GM12878 (cell line): ENCODE measurements at regions of chr14 and their contacts with region 1.

Region 1: GRCh38 chr14:83874662-83875061 is 1655.3 kb upstream of the FLRT2 start:
- DNase-seq: no peak
- ATAC-seq: peak; percentile 77
- H3K4me3 ChIP-seq: no peak overlapping the region
- H3K27ac ChIP-seq: no peak overlapping the region
- H3K4me1 ChIP-seq: no peaks in the 10 kb centered on the region
- H3K27me3 ChIP-seq: no peaks in the 10 kb centered on the region
- CTCF ChIP-seq: no peak
- EP300 ChIP-seq: peak in 1 of 2 experiments; percentile 36; a peak in 1 of 4 replicates
- POLR2A ChIP-seq: no peak
- RAD21 ChIP-seq: no peak

Region 2: DNA sequence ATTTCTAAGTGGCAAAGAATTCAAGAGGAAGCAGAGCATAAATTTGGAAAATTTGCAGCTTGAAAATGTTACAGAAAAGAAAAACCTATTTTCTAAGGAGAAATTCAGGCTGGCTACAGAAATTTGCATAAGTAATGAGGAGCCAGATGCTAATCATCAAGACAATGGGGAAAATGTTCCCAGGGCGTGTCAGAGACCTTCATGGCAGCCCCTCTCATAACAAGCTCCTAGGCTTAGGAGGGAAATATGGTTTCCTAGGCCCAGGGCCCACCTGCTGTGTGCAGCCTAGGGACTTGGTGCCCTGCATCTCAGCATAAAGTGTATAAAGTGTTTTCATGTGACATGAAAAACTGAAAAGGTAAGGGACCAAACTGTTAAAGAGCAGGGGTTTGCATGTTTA is 141.0 kb before region 1 on chr14:
- CTCF ChIA-PET with region 1: no interaction called
- POLR2A ChIA-PET with region 1: no interaction called
- RAD21 ChIA-PET with region 1: no interaction called
- SMC1A ChIA-PET with region 1: no interaction called
- in situ Hi-C with region 1: no loop called
- intact Hi-C with region 1: no loop called
- DNase-seq: no peak
- ATAC-seq: no peak
- H3K4me3 ChIP-seq: no peak overlapping the region
- H3K27ac ChIP-seq: no peak overlapping the region
- H3K4me1 ChIP-seq: no peaks in the 10 kb centered on the region
- H3K27me3 ChIP-seq: no peaks in the 10 kb centered on the region
- CTCF ChIP-seq: no peak
- EP300 ChIP-seq: no peak
- POLR2A ChIP-seq: no peak
- RAD21 ChIP-seq: no peak

Region 3: DNA sequence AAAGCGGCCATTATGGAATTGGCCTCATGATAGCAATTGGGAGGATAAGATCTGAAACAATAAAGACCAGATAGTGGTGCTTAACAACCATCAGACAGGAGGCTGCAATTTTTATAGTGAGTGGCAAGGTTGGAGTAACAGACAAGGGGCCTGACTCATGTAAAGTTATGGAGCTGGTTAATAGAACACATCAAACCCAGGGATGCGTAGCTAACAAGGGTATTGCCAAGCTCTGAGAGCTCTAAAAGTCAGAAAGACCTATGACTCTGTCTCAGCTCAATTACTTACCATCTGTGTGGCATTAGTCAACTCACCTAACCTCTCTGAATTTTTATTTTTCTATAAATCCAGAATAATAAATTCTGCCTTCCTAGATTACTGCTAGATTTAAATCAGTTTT is 76.2 kb before region 1 on chr14:
- CTCF ChIA-PET with region 1: no interaction called
- POLR2A ChIA-PET with region 1: no interaction called
- RAD21 ChIA-PET with region 1: no interaction called
- SMC1A ChIA-PET with region 1: no interaction called
- in situ Hi-C with region 1: no loop called
- intact Hi-C with region 1: no loop called
- DNase-seq: no peak
- ATAC-seq: no peak
- H3K4me3 ChIP-seq: no peak overlapping the region
- H3K27ac ChIP-seq: no peak overlapping the region
- H3K4me1 ChIP-seq: no peaks in the 10 kb centered on the region
- H3K27me3 ChIP-seq: no peaks in the 10 kb centered on the region
- CTCF ChIP-seq: no peak
- EP300 ChIP-seq: no peak
- POLR2A ChIP-seq: no peak
- RAD21 ChIP-seq: no peak

Region 4: DNA sequence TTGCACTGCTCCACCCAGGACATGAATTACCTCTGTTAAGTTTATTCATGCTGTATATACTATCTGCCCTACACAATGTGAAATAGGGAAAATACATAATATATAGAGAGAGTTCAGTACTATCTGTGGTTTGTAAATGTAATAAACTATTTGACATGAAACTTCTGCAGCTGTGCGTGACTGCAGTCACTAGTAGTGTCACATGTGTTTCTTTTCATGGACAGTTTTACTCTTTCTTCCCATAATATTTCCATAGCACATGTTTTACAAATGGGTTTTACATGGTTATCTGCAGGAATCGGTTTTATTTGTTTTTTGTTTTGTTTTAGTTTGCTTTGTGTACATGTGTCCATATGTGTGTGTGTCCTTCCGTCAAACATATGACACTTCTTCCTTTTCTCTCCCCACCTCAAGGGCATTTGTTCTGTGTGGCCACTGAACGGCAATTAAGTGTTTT is 11.2 kb after region 1 on chr14:
- CTCF ChIA-PET with region 1: interaction called, 4 read pairs
- POLR2A ChIA-PET with region 1: interaction called, 3 read pairs
- RAD21 ChIA-PET with region 1: interaction called, 10 read pairs
- SMC1A ChIA-PET with region 1: interaction called, 28 read pairs
- in situ Hi-C with region 1: no loop called
- intact Hi-C with region 1: no loop called
- DNase-seq: no peak
- ATAC-seq: peak; percentile 72
- H3K4me3 ChIP-seq: no peak overlapping the region
- H3K27ac ChIP-seq: no peak overlapping the region
- H3K4me1 ChIP-seq: no peaks in the 10 kb centered on the region
- H3K27me3 ChIP-seq: no peaks in the 10 kb centered on the region
- CTCF ChIP-seq: no peak
- EP300 ChIP-seq: no peak
- POLR2A ChIP-seq: no peak
- RAD21 ChIP-seq: no peak